HepG2 (cell line): ENCODE measurements at regions of chr19 and their contacts with region 1.

Region 1: DNA sequence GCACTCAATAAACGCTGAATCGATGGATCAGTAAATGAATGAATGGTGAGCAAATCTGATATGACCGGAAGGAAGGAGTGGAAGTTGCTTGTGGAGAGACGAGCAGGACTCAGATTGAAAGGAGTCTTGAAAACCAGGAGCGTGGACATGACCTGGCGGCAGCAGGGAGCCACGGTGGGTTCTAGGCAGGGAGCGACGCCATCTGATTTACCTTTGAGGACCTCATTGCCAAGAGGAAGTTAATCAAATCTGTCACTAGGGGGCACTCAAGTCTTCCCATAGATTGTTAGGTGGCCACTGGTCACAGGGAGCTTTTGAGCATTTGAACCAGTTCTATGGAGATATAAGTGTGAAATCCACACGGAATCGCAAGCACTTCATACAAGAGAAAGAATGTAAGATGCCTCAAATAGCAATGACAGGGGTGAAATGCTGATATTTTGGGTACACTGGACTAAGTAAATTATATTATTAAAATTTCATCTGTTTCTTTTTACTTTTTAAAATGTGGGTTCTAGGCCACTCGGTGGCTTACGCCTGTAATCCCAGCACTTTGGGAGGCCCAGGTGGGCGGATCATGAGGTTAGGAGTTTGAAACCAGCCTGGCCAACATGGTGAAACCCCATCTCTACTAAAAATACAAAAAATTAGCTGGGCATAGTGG is 9.2 kb upstream of the FBN3 start:
- DNase-seq: peak; percentile 87
- ATAC-seq: peak; percentile 22
- H3K4me3 ChIP-seq: no peak overlapping the region
- H3K27ac ChIP-seq: no peak overlapping the region
- H3K4me1 ChIP-seq: peaks cover 37% of the 10 kb centered on the region
- H3K27me3 ChIP-seq: no peaks in the 10 kb centered on the region
- CTCF ChIP-seq: peak; percentile 90
- EP300 ChIP-seq: no peak
- POLR2A ChIP-seq: no peak
- RAD21 ChIP-seq: peak; percentile 89

Region 2: DNA sequence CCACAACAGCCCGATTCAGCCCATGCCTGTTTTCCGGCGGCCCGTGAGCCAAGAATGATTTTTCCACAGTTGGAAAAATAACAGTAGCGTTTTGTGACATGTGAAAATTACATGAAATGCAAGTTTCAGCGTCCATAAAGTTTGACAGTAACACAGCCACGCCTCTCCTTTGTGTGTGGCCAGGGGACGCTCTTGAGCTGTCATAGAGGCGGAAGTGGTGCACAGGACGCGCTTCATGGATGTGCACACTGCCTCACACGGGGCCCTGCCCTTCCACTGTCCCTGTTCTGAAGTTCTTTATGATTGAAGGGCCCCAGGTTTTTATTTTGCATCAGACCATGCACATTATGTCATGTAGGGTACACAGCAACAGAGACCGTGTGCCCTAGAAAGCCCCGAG is 140.7 kb before region 1 on chr19:
- CTCF ChIA-PET with region 1: no interaction called
- POLR2A ChIA-PET with region 1: no interaction called
- in situ Hi-C with region 1: no loop called
- intact Hi-C with region 1: loop called (anchors 5 kb)
- DNase-seq: peak; percentile 45
- ATAC-seq: peak; percentile 89
- H3K4me3 ChIP-seq: no peak overlapping the region
- H3K27ac ChIP-seq: no peak overlapping the region
- H3K4me1 ChIP-seq: peaks cover 36% of the 10 kb centered on the region
- H3K27me3 ChIP-seq: peaks cover 0 to 3% of the 10 kb centered on the region in 2 experiments; a peak in 1 of 5 replicates
- CTCF ChIP-seq: peak; percentile 87
- EP300 ChIP-seq: no peak
- POLR2A ChIP-seq: no peak
- RAD21 ChIP-seq: peak; percentile 62; the same call in 1 of the 2 replicates

Region 3: DNA sequence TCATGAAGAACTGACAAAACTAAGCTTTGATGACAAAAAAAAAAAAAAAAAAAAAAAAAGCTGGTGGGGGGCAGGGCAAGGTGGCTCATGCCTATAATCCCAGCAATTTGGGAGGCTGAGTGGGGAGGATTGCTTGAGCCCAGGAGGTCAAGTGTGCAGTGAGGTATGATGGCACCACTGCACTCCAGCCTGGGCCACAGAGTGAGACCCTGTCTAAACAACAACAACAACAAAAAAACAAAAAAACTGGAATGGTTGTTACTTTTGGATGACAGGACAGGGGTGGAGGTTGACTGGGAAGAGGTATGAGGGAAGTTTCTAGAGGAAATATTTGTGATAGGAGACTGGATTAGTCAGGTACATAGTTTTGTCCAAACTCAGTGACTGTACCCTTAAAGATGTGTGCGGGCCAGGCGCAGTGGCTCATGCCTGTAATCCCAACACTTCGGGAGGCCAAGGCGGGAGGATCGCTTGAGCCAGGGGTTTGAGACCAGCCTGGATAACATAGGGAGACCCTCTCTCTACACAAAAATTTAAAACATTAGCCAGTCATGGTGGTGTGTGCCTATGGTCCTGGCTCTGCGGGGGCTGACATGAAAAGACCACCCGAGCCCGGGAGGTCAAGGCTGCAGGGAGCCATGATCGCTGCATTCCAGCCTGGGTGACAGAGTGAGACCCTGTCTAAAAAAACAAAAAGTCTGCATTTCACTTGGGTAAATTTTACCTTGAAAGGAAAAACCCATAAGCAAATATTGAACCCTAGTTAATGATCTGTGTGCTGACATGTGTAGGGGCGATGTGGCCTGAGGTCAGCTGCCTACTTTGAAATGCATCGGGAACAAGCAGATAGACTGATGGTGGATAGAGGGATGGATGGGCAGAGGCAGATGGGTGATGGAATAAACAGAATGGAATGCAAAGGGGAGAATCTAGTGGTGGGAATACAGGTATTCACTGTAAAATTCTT is 87.6 kb after region 1 on chr19:
- CTCF ChIA-PET with region 1: no interaction called
- POLR2A ChIA-PET with region 1: interaction called, 4 read pairs
- in situ Hi-C with region 1: loop called (anchors 5 kb)
- intact Hi-C with region 1: loop called (anchors 1 kb)
- DNase-seq: peak; percentile 97
- ATAC-seq: peak; percentile 95
- H3K4me3 ChIP-seq: 0 out of 6 replicates have a peak overlapping the region, but pooled peaks of 1 of the 3 experiments have one; percentile 17
- H3K27ac ChIP-seq: peak overlapping the region; percentile 87
- H3K4me1 ChIP-seq: peaks cover 50% of the 10 kb centered on the region
- H3K27me3 ChIP-seq: no peaks in the 10 kb centered on the region
- CTCF ChIP-seq: 0 out of 2 replicates have a peak, but pooled peaks have one; percentile 3
- EP300 ChIP-seq: peak in 1 of 2 experiments; percentile 96; a peak in 2 of 4 replicates
- POLR2A ChIP-seq: peak in 1 of 2 experiments; percentile 45; a peak in 1 of 4 replicates
- RAD21 ChIP-seq: no peak

Region 4: DNA sequence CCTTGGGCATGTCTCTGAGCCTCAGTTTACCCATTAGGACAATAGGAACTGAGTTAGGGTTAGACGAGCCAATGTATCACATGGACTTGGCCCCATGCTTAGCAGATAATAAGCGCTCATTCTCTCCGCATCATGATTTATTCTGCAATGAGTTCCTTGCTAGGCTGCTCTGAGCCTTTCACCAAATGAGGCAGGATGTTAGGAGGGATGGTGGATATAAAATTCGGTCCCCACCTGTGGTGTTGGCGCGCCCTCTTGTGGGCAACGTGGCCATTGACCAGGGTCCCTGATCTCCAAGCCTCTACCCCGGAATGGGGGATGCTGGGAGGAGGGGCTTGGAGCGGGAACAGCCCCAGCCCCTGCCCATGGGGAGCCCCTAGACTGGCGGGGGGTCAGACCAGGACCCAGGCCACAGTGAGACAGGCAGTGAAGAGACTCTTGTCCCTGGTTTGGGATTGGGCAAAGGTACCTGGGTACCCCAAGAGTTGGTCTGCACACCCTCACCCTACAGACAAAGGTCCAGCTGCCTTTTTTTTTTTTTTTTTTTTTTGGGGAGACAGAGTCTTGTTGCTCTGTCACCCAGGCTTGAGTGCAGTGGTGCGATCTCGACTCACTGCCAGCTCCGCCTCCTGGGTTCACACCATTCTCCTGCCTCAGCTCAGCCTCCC is 94.5 kb after region 1 on chr19:
- CTCF ChIA-PET with region 1: interaction called, 45 read pairs
- POLR2A ChIA-PET with region 1: interaction called, 3 read pairs
- in situ Hi-C with region 1: loop called (anchors 5 kb)
- intact Hi-C with region 1: loop called (anchors 1 kb)
- DNase-seq: peak; percentile 67
- ATAC-seq: peak; percentile 74
- H3K4me3 ChIP-seq: no peak overlapping the region
- H3K27ac ChIP-seq: no peak overlapping the region
- H3K4me1 ChIP-seq: peaks cover 29% of the 10 kb centered on the region
- H3K27me3 ChIP-seq: no peaks in the 10 kb centered on the region; a peak in 1 of 5 replicates
- CTCF ChIP-seq: peak; percentile 97
- EP300 ChIP-seq: no peak
- POLR2A ChIP-seq: 0 out of 4 replicates have a peak, but pooled peaks of 1 of the 2 experiments have one; percentile 21
- RAD21 ChIP-seq: peak; percentile 98

Region 5: DNA sequence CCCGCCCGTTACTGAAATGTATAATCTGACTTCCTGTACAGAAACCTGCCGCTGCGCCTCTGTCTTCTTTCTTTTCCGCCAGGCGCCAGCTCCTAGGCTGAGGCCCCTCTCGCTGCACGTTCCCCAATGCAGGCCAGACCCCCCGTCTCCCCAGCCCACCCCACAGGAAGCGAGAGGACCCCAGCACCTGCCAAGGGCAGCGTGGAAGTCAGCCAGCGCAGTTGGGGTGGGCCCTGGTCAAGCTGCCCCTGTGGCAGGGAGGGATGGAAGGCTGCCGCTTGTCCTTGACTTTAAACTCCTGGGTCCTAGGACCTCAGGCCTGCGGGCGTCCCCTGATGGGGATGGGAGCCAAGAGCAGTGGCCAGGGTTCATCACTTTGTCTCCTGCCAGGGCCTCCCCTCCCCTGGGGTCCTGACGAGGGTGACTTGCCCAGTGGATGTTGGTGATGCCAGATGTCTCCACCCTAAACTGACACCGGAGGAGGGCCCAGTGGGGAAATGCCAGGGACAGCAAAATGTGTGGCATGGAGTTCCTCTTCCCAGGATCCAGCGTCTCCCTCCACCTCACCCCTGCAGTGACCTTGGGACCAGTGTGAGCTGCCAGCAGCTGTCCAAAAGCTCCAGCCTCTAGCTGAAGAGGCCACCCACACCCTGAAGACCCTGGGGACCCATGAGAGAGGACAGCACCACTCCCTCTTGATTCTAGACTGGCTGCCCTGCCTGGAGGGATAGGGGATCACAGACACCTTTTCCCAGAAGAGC is 246.0 kb after region 1 on chr19:
- CTCF ChIA-PET with region 1: no interaction called
- POLR2A ChIA-PET with region 1: no interaction called
- in situ Hi-C with region 1: no loop called
- intact Hi-C with region 1: no loop called
- DNase-seq: no peak
- ATAC-seq: peak; percentile 18
- H3K4me3 ChIP-seq: no peak overlapping the region
- H3K27ac ChIP-seq: no peak overlapping the region
- H3K4me1 ChIP-seq: 0 out of 2 replicates have a peak, but pooled peaks cover 16% of the 10 kb centered on the region
- H3K27me3 ChIP-seq: no peaks in the 10 kb centered on the region
- CTCF ChIP-seq: no peak
- EP300 ChIP-seq: no peak
- POLR2A ChIP-seq: no peak
- RAD21 ChIP-seq: no peak